ENCODE measurements at regions of chr7 and their contacts with region 1.

Region 1: DNA sequence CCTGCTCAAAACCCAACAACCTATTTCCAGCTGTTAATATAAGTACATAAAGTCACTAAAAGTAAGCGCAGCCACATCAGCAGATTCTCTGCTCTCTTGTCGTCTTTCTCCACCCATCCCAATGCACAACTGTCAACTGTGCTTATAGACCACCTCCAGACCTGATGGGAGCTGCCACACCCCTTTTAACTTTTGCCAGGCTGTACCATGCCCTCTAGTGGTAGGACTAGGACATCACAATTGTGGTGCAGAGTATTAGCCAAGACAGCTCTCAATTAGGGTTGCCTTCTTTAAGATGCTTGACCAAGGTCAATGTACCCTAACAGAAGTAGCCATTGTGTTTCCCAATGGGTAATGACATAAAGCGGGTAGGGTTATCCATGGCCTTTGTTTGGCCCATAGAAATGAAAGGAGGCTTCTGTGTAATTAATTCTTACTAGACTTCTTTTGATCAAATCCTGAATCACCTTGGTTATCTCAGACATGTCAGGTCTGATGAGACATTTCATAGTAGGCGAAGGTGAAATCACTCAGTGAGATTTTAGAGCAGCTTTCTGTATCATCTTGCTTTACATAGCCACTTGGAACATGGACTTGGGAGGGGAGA is 68.1 kb downstream of the SCRN1 start:
- DNase-seq: no peak
- H3K4me3 ChIP-seq: no peak overlapping the region
- CTCF ChIP-seq: peak; percentile 87

Region 2: GRCh38 chr7:29748286-29749108 is 173.0 kb before region 1 on chr7:
- CTCF ChIA-PET with region 1: interaction called, 46 read pairs
- POLR2A ChIA-PET with region 1: no interaction called
- DNase-seq: peak; percentile 10
- H3K4me3 ChIP-seq: no peak overlapping the region
- CTCF ChIP-seq: peak; percentile 40

Region 3: GRCh38 chr7:29906200-29907022 is 15.1 kb before region 1 on chr7:
- CTCF ChIA-PET with region 1: interaction called, 42 read pairs
- POLR2A ChIA-PET with region 1: no interaction called
- DNase-seq: no peak
- H3K4me3 ChIP-seq: no peak overlapping the region
- CTCF ChIP-seq: no peak

Region 4: DNA sequence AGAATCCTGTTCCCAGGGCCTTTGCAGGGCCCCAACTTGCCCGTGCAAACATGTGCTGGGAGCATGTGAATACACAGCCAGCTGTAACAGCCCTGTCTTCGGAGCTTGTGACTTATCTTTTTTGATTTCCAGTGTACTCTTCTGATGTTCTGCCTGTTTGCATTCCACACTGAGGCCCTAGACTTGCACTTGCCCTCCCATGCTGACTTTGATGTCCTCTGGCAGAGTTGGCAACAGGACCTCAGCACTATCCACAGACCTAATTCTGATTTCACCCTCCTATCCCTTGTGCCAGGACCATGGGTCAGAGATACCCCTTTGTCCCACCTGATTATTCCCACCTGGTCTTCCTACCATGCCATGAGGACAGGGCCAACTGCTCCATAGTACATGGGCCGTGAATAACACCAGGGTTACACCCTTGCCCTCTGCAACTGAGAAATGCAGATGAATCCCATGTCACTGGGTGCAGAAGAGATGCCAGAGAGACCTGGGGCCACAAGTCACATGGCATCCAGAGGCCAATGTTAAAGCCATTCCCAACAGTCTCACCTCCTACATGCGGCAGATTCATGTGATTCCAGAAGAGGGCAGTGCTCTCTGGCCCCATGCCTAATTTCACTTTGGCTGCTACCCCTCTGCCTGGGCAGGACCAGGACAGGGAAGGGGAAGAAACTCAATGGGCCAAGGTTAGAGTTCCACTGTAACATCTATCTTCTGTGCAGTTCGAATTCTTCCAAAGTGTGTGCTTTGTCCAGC is 25.1 kb after region 1 on chr7:
- CTCF ChIA-PET with region 1: interaction called, 19 read pairs
- POLR2A ChIA-PET with region 1: no interaction called
- DNase-seq: no peak
- H3K4me3 ChIP-seq: no peak overlapping the region
- CTCF ChIP-seq: peak; percentile 27

Measured in AG04449 (cell line).